ENCODE measurements at regions of chr9 and their contacts with region 1.

Region 1: DNA sequence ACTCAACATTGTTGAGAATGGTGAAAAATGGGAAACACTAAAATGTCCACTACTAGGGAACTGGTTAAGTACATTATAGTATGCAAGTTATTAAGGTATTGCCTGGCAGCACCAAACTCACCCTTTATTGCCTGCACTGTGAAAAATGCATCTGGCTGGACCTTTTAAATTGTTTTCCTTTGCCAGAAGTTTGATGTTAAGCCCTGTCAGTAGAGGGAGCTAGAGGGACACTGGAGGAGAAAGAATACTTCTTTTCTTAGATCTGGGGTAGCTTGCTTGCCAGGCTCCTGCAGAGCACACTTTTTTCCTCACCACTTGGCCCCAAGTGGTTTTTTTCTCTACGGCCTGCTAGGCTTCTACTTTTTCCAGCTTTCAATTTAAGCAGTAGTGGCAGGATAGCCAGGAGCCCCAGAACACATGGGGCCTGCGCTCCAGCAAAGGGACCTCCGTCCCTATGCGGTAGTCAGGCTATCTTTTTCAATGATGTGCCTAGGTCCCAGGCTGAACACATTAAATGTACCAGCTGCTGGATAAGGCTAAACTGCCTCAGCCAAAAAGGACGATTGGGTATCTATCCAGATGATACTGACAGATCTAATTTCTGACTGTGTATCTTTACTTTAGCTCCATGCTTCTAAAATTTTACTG is 8.0 kb upstream of the HABP4 start:
- DNase-seq: no peak
- H3K4me3 Mint-ChIP-seq: no peak overlapping the region
- H3K27ac Mint-ChIP-seq: no peak overlapping the region
- H3K4me1 Mint-ChIP-seq: peaks cover 3% of the 10 kb centered on the region
- H3K27me3 Mint-ChIP-seq: no peaks in the 10 kb centered on the region

Region 2: GRCh38 chr9:95756986-95757385 is 684.9 kb before region 1 on chr9:
- intact Hi-C with region 1: no loop called
- DNase-seq: no peak
- H3K4me3 Mint-ChIP-seq: no peak overlapping the region
- H3K27ac Mint-ChIP-seq: no peak overlapping the region
- H3K4me1 Mint-ChIP-seq: no peaks in the 10 kb centered on the region
- H3K27me3 Mint-ChIP-seq: peaks cover 30% of the 10 kb centered on the region

Region 3: DNA sequence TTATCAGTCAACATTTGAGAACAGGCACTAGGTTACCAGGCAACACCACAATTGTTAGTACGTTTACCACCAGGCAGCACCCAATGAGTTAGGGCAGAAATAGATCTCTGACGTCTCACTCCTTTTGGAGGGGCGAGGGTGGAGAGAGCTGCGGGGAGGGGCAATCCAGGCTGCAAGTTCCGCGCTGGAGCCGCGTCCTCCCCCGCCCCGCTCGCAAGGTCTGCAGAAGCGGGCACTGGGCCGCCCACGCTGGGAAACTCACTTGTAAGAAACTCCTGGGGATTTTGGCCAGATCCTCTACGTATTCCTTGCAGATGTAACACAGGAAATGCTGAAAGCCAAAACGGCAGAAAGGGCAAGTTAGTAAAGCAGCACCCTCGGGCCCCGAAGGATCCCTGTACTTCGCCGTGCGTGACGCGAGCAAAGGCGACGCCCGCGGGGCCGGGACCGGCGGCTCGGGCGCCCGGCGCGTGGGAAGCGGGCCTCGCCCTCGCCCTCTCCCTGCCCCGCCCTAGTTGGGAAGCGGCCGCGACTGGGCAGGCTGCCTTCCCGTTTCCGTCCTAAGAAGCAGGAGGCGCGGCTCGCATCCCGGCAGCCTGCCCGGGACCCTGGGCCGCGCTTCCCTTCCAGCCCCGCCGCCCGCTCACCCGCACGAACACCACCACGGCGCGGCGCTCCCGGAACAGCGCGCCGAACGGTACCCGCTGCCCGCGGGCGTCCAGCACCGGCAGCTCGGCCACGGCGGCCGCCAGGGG is 212.7 kb after region 1 on chr9:
- intact Hi-C with region 1: loop called (anchors 5 kb)
- DNase-seq: peak; percentile 62
- H3K4me3 Mint-ChIP-seq: peak overlapping the region; percentile 85
- H3K27ac Mint-ChIP-seq: peak overlapping the region; percentile 73
- H3K4me1 Mint-ChIP-seq: peaks cover 16% of the 10 kb centered on the region
- H3K27me3 Mint-ChIP-seq: peaks cover 14% of the 10 kb centered on the region